Activated CD8-positive, alpha-beta T cell treated with anti-CD3 and anti-CD28 coated beads, Interleukin-2, amount 10 ng/mL, durations not matched to agents 7 days and 5 days (primary cell): ENCODE measurements at regions of chr6 and their contacts with region 1.

Region 1: GRCh38 chr6:11711003-11711983 is 67.3 kb downstream of the ADTRP start:
- DNase-seq: no peak
- ATAC-seq: no peak
- H3K4me3 Mint-ChIP-seq: no peak overlapping the region
- H3K27ac Mint-ChIP-seq: peak overlapping the region; percentile 84
- H3K4me1 Mint-ChIP-seq: peaks cover 59% of the 10 kb centered on the region
- H3K27me3 Mint-ChIP-seq: no peaks in the 10 kb centered on the region

Region 2: GRCh38 chr6:11621119-11621518 is 90.2 kb before region 1 on chr6:
- CTCF ChIA-PET with region 1: no interaction called
- POLR2A ChIA-PET with region 1: no interaction called
- DNase-seq: no peak
- ATAC-seq: no peak
- H3K4me3 Mint-ChIP-seq: no peak overlapping the region
- H3K27ac Mint-ChIP-seq: no peak overlapping the region
- H3K4me1 Mint-ChIP-seq: no peaks in the 10 kb centered on the region
- H3K27me3 Mint-ChIP-seq: no peaks in the 10 kb centered on the region

Region 3: GRCh38 chr6:11722805-11723631 is 11.7 kb after region 1 on chr6:
- CTCF ChIA-PET with region 1: interaction called, 24 read pairs
- POLR2A ChIA-PET with region 1: interaction called, 24 read pairs
- DNase-seq: no peak
- ATAC-seq: no peak
- H3K4me3 Mint-ChIP-seq: no peak overlapping the region
- H3K27ac Mint-ChIP-seq: peak overlapping the region; percentile 78
- H3K4me1 Mint-ChIP-seq: peaks cover 31% of the 10 kb centered on the region
- H3K27me3 Mint-ChIP-seq: no peaks in the 10 kb centered on the region

Region 4: DNA sequence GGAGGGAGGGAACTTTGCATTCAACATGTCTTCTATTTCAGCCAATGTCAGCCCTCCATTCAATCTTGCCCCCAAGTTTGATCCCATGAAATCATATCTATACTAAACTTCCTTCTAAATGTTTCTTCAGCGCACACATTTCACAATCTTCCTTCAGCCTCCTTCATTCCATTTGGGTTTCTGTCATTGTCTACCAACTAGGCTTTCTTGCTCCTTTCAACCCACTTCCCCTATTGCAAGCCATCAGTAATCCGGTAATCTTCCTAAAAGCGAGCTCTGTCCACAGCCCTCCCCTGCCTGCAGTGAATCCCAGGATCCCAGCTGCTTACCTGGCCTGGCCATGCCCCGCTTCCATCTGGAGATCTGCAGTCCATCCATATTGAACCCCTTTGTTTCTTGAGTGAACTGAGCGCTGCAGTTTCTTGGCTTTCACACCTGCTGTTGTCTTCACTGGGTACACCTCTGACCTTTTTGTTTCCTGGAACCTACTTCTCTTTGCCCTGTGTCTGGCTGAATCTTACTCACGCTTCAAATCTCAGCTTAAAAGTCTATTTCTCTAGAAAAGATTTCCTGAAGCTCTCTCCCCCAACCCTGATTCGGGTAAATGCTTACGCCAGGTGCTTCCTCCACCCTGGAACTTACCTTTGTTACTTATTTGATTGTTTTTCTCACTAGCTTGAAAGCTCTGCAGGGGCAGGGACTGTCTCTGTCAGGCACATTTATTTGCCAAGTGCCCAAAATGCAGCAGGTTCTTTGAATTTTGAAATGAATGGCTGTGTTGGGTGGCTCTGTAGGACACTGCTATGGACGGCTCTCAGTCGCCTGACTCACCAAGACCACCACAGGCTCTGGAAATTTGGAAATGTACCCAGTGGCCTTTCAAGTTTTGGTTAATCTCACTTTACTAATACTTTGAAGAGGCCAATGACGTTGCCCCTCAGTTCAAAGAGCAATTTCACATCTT is 17.0 kb after region 1 on chr6:
- CTCF ChIA-PET with region 1: interaction called, 24 read pairs
- POLR2A ChIA-PET with region 1: interaction called, 24 read pairs
- DNase-seq: no peak
- ATAC-seq: peak; percentile 40
- H3K4me3 Mint-ChIP-seq: peak overlapping the region; percentile 59
- H3K27ac Mint-ChIP-seq: peak overlapping the region; percentile 81
- H3K4me1 Mint-ChIP-seq: peaks cover 66% of the 10 kb centered on the region
- H3K27me3 Mint-ChIP-seq: no peaks in the 10 kb centered on the region

Region 5: DNA sequence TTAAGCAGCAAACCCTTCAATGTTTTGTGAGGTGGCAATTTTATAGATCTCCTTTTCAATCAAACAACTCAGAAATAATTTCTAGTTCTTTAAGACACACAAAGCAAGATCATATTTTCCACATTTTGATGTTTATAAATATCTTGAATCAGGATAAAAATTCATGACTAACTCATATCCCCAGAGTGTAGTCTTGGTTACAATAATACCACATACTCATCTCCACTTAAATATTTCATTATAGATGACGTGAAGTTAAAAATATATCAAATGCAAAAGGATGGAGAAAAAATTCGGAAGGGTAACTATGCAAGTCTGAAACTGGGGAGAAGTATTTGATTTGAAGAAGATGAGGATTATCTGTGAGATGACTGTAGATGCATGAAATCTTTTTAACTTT is 241.0 kb after region 1 on chr6:
- CTCF ChIA-PET with region 1: no interaction called
- POLR2A ChIA-PET with region 1: no interaction called
- DNase-seq: no peak
- ATAC-seq: no peak
- H3K4me3 Mint-ChIP-seq: no peak overlapping the region
- H3K27ac Mint-ChIP-seq: no peak overlapping the region
- H3K4me1 Mint-ChIP-seq: no peaks in the 10 kb centered on the region
- H3K27me3 Mint-ChIP-seq: no peaks in the 10 kb centered on the region

Region 6: GRCh38 chr6:12011276-12012076 is 300.2 kb after region 1 on chr6:
- CTCF ChIA-PET with region 1: interaction called, 3 read pairs
- POLR2A ChIA-PET with region 1: interaction called, 22 read pairs
- DNase-seq: peak; percentile 98
- ATAC-seq: peak; percentile 78
- H3K4me3 Mint-ChIP-seq: peak overlapping the region; percentile 82
- H3K27ac Mint-ChIP-seq: peak overlapping the region; percentile 95
- H3K4me1 Mint-ChIP-seq: peaks cover 48% of the 10 kb centered on the region
- H3K27me3 Mint-ChIP-seq: no peaks in the 10 kb centered on the region